OCI-LY7 (cell line): ENCODE measurements at regions of chr14 and their contacts with region 1.

Region 1: GRCh38 chr14:100234511-100234910 is 4.4 kb upstream of the YY1 start:
- DNase-seq: no peak
- H3K4me3 ChIP-seq: no peak overlapping the region
- H3K27ac ChIP-seq: peak overlapping the region; percentile 34
- H3K4me1 ChIP-seq: peaks cover 31% of the 10 kb centered on the region
- CTCF ChIP-seq: no peak

Region 2: GRCh38 chr14:100165376-100165775 is 69.1 kb before region 1 on chr14:
- CTCF ChIA-PET with region 1: no interaction called
- POLR2A ChIA-PET with region 1: no interaction called
- intact Hi-C with region 1: no loop called
- DNase-seq: no peak
- H3K4me3 ChIP-seq: no peak overlapping the region
- H3K27ac ChIP-seq: no peak overlapping the region
- H3K4me1 ChIP-seq: peaks cover 14% of the 10 kb centered on the region
- CTCF ChIP-seq: no peak

Region 3: DNA sequence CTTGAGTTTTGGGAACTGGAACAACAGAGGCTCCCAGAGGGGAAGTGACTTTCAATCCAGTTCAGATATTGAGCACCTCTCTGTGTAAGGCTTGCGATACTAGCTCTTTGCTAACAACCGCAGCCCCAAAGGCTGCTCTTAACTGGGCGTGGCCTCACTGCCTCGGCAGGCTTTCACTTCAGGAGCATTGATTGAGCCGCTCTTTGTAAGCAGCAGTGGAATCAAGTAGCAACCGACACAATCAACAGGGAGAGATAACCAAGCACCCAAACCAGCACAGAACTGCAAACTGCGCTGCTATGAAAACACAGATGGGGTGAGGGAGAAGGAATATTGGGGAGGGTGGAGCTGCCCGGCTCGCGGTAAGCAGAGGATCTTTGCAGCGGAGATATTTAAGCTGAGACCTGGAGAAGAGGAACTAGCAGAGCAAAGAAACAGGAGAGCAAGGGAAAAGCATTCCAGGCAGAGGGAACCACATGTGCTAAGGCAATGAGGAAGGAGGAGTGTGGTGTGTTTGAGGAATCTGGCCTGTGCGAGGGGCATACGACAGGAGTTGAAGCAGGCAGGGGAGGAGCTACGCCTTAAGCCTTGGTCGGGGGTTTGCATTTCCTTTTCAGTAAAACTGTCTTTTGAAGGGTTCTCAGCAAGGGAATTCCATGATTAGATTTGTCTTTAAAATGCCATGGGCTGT is 12.8 kb before region 1 on chr14:
- CTCF ChIA-PET with region 1: no interaction called
- POLR2A ChIA-PET with region 1: interaction called, 24 read pairs
- intact Hi-C with region 1: no loop called
- DNase-seq: peak; percentile 67
- H3K4me3 ChIP-seq: peak overlapping the region; percentile 54
- H3K27ac ChIP-seq: peak overlapping the region; percentile 1
- H3K4me1 ChIP-seq: peaks cover 35% of the 10 kb centered on the region
- CTCF ChIP-seq: no peak

Region 4: GRCh38 chr14:100384819-100385813 is 150.6 kb after region 1 on chr14:
- CTCF ChIA-PET with region 1: no interaction called
- POLR2A ChIA-PET with region 1: no interaction called
- intact Hi-C with region 1: no loop called
- DNase-seq: peak; percentile 19
- H3K4me3 ChIP-seq: no peak overlapping the region
- H3K27ac ChIP-seq: no peak overlapping the region
- H3K4me1 ChIP-seq: no peaks in the 10 kb centered on the region
- CTCF ChIP-seq: peak; percentile 73